Panc1 (cell line): ENCODE measurements at regions of chr17 and their contacts with region 1.

Region 1: GRCh38 chr17:81094509-81095382 is 59.8 kb downstream of the BAIAP2 start:
- DNase-seq: peak; percentile 67
- ATAC-seq: peak; percentile 52
- H3K4me3 ChIP-seq: no peak overlapping the region
- H3K27ac ChIP-seq: peak overlapping the region; percentile 64
- H3K4me1 ChIP-seq: peaks cover 68% of the 10 kb centered on the region
- H3K27me3 ChIP-seq: no peaks in the 10 kb centered on the region
- CTCF ChIP-seq: no peak

Region 2: DNA sequence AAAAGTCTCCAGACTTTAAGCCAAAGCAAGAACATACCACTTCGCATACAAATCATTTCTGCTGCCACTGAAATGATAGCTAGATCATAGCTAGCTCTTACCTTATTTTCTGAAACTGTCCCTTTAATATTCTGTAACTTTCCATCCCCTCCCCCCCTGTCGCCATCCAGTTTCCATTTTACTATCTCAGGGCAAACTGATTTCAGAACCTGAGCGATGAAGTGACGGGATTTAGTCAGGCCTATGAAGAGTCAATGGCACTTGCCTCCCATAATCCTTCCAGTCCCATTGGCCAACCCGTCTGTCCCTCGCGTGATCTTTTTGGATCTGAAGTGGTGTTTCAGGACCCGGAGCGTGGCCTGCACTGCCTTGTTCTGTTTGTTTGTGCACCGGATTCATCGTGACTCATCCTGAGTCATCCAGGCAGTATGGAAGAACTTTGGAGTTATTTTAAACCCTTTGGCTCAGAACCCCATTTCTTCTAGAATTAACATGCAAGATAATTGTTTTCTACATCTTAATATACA is 302.9 kb before region 1 on chr17:
- CTCF ChIA-PET with region 1: no interaction called
- POLR2A ChIA-PET with region 1: no interaction called
- in situ Hi-C with region 1: no loop called
- intact Hi-C with region 1: no loop called
- DNase-seq: peak; percentile 92
- ATAC-seq: peak; percentile 94
- H3K4me3 ChIP-seq: peak overlapping the region in 1 of 2 experiments; percentile 35; a peak in 3 of 4 replicates
- H3K27ac ChIP-seq: peak overlapping the region; percentile 96
- H3K4me1 ChIP-seq: peaks cover 46% of the 10 kb centered on the region
- H3K27me3 ChIP-seq: no peaks in the 10 kb centered on the region
- CTCF ChIP-seq: no peak

Region 3: DNA sequence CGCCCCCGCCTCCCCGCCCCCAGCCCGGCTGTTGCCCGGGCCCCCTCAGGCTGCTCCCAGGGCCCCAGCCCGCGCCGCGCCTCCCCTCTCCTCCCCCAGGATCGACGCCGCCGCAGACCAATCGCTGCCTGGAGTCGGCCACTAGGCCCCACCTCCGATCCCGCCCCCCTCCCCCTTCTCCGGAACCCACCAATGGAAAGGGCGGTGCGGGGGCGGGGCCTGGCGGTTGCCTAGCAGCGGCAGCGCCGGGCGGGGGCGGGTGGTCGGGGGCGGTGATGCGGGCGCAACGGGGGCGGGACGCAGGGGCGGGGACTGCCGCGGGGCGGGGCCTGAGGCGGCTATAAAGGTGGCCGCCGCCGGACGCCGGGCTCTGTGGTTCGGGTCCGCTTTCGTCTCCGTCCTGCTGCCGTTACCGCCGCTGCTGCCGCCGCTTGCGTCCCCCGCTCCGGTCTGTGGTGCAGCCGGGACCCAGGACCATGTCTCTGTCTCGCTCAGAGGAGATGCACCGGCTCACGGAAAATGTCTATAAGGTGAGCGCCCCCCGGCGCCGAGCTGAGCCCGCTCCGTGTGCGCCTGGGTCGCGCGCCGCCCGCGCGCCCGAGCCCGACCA is 59.9 kb before region 1 on chr17 and contains the start of gene BAIAP2:
- CTCF ChIA-PET with region 1: interaction called, 9 read pairs
- POLR2A ChIA-PET with region 1: no interaction called
- in situ Hi-C with region 1: no loop called
- intact Hi-C with region 1: loop called (anchors 5 kb)
- DNase-seq: no peak
- ATAC-seq: peak; percentile 82
- H3K4me3 ChIP-seq: peak within 1 kb of the TSS; percentile 60 to 87
- H3K27ac ChIP-seq: peak within 1 kb of the TSS; percentile 99
- H3K4me1 ChIP-seq: peaks cover 29% of the 10 kb centered on the region
- H3K27me3 ChIP-seq: no peaks in the 10 kb centered on the region
- CTCF ChIP-seq: no peak
- total RNA-seq, gene BAIAP2: 125 TPM